ENCODE measurements at regions of chrX and their contacts with region 1.

Region 1: DNA sequence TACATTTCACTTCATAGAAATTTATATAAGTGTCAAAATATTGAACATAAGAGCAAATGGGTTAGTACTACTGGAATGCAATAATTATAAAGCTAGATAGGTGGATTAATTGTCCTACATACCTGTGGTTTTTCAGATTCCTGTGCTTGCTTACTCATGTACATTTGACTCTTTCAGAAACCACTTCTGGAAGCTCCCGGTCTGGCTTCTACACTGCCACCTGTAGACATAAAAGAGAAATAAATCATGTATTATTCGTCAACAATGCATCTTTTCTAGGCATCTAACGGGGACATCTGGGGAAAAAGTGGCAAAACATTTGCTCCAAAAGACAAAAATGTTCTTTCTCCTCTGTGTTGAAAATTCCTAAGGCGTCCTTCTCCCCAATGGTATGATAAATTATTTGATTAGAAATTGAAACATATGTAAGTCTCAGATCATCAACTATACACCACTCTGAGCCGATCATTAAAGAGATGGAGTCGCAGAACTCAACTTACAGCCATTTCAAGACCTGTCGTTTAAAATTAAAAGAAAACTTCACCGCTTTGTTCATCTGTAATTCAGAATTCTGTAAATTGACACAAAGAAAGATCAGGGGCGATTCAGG is 648.7 kb upstream of the DIPK2B start:
- DNase-seq: peak; percentile 30
- H3K4me3 Mint-ChIP-seq: peak overlapping the region; percentile 99
- H3K27ac Mint-ChIP-seq: peak overlapping the region; percentile 89
- H3K4me1 Mint-ChIP-seq: peaks cover 54% of the 10 kb centered on the region
- H3K27me3 Mint-ChIP-seq: no peaks in the 10 kb centered on the region

Region 2: GRCh38 chrX:45769761-45770582 is 79.4 kb before region 1 on chrX:
- CTCF ChIA-PET with region 1: interaction called, 3 read pairs
- POLR2A ChIA-PET with region 1: interaction called, 25 read pairs
- DNase-seq: peak; percentile 49
- H3K4me3 Mint-ChIP-seq: peak overlapping the region; percentile 86
- H3K27ac Mint-ChIP-seq: peak overlapping the region; percentile 87
- H3K4me1 Mint-ChIP-seq: peaks cover 59% of the 10 kb centered on the region
- H3K27me3 Mint-ChIP-seq: no peaks in the 10 kb centered on the region

Region 3: GRCh38 chrX:45801554-45801953 is 47.8 kb before region 1 on chrX:
- CTCF ChIA-PET with region 1: interaction called, 11 read pairs
- POLR2A ChIA-PET with region 1: interaction called, 15 read pairs
- DNase-seq: no peak
- H3K4me3 Mint-ChIP-seq: peak overlapping the region; percentile 48
- H3K27ac Mint-ChIP-seq: peak overlapping the region; percentile 73
- H3K4me1 Mint-ChIP-seq: peaks cover 82% of the 10 kb centered on the region
- H3K27me3 Mint-ChIP-seq: no peaks in the 10 kb centered on the region

Region 4: DNA sequence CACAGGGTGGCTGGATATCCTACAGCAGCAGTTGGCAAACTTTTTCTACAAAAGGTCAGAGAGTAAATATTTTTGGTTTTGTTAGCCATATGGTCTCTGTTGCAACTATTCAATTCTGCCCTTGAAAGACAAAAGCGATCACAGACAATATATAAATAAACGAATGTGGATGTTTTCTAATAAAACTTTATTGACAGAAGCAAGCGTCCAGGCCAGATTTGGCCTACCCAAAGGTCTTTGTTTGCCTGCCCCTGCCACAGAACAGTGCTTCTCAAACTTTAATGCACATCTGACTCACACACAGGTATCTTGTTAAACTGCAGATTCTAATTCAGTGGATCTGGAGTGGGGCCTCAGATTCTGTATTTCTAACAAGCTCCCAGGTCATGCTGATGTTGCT is 27.2 kb before region 1 on chrX:
- CTCF ChIA-PET with region 1: no interaction called
- POLR2A ChIA-PET with region 1: no interaction called
- DNase-seq: no peak
- H3K4me3 Mint-ChIP-seq: no peak overlapping the region
- H3K27ac Mint-ChIP-seq: no peak overlapping the region
- H3K4me1 Mint-ChIP-seq: peaks cover 28% of the 10 kb centered on the region
- H3K27me3 Mint-ChIP-seq: no peaks in the 10 kb centered on the region

Region 5: GRCh38 chrX:45894864-45895645 is 45.7 kb after region 1 on chrX:
- CTCF ChIA-PET with region 1: no interaction called
- POLR2A ChIA-PET with region 1: no interaction called
- DNase-seq: no peak
- H3K4me3 Mint-ChIP-seq: no peak overlapping the region
- H3K27ac Mint-ChIP-seq: no peak overlapping the region
- H3K4me1 Mint-ChIP-seq: no peaks in the 10 kb centered on the region
- H3K27me3 Mint-ChIP-seq: peaks cover 2% of the 10 kb centered on the region

Region 6: GRCh38 chrX:45912316-45912715 is 63.0 kb after region 1 on chrX:
- CTCF ChIA-PET with region 1: no interaction called
- POLR2A ChIA-PET with region 1: no interaction called
- DNase-seq: no peak
- H3K4me3 Mint-ChIP-seq: no peak overlapping the region
- H3K27ac Mint-ChIP-seq: no peak overlapping the region
- H3K4me1 Mint-ChIP-seq: peaks cover 2% of the 10 kb centered on the region
- H3K27me3 Mint-ChIP-seq: no peaks in the 10 kb centered on the region

Measured in activated CD4-positive, alpha-beta memory T cell treated with anti-CD3 and anti-CD28 coated beads, Interleukin-2, amount 10 ng/mL, durations not matched to agents 7 days and 5 days (primary cell).